ENCODE measurements at regions of chr6 and their contacts with region 1.

Region 1: GRCh38 chr6:134436281-134436815 is 118.4 kb upstream of the SGK1 start:
- DNase-seq: peak; percentile 92 to 95 (median 93)
- H3K4me3 ChIP-seq: peak overlapping the region in 1 of 3 experiments; percentile 47
- H3K4me3 Mint-ChIP-seq: no peak overlapping the region
- H3K27ac ChIP-seq: peak overlapping the region; percentile 86 to 96
- H3K27ac Mint-ChIP-seq: peak overlapping the region; percentile 97 to 99 (median 98)
- H3K4me1 ChIP-seq: peaks cover 29 to 42% of the 10 kb centered on the region in 2 donors
- H3K4me1 Mint-ChIP-seq: peaks cover 35% of the 10 kb centered on the region
- H3K27me3 ChIP-seq: no peaks in the 10 kb centered on the region
- H3K27me3 Mint-ChIP-seq: no peaks in the 10 kb centered on the region
- CTCF ChIP-seq: no peak

Region 2: DNA sequence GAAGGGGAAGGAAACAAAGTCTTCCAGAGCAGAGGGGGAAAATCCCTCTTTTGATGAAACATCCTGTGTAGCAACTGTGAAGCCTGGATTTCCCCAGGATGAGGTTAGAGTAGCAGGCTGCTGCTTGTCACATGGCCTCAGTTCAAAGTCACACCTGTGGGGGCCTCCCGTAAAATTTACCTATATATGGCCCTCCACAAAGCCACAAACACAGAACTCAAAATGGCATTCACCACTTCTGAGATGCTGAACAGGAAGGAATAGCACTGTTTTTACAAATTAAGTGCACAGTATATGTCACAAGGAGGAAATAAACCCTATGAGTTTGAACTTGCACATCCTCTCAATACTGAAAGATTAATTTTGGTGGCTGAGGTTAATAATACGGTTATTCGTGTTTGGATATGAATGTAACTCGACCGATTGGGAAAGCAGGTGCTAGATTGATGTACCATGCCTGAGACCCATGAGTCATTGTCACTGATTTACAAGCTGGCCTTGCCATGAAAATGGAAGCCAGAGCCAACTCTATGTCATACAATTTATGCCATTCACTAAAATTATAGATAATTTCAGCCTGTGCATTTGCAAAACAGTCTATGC is 189.0 kb before region 1 on chr6:
- intact Hi-C with region 1: loop called in 1 of 2 experiments (anchors 5 kb)
- DNase-seq: peak; percentile 46 to 94 (median 87)
- H3K4me3 ChIP-seq: peak overlapping the region in 1 of 3 experiments; percentile 34
- H3K4me3 Mint-ChIP-seq: peak overlapping the region in 1 of 2 donors; percentile 53
- H3K27ac ChIP-seq: peak overlapping the region; percentile 69 to 80
- H3K27ac Mint-ChIP-seq: peak overlapping the region; percentile 90 to 96 (median 94)
- H3K4me1 ChIP-seq: peaks cover 30 to 43% of the 10 kb centered on the region in 2 donors
- H3K4me1 Mint-ChIP-seq: peaks cover 50% of the 10 kb centered on the region
- H3K27me3 ChIP-seq: no peaks in the 10 kb centered on the region
- H3K27me3 Mint-ChIP-seq: peaks cover 0 to 3% (median 0%) of the 10 kb centered on the region in 3 donors
- CTCF ChIP-seq: no peak

Region 3: DNA sequence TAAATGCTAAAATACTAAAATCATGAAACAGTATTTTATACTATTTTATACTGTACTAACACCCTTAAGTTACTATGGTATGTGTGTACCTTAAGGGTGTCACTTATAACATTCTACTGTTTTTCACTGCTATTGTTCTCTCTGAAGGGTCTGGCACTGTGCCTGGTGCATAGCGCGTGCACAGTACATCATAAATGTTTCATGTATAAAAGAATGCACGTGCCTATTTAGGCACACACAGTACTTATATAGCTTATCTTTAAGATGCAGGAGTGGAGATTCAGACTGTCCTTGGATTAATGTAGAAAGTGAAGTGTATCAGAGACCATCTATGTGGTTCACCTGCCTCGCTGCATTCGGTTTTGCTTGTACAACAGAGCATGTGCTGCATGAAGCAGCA is 54.4 kb before region 1 on chr6:
- intact Hi-C with region 1: loop called in 1 of 2 experiments (anchors 10 kb)
- DNase-seq: no peak
- H3K4me3 ChIP-seq: no peak overlapping the region
- H3K4me3 Mint-ChIP-seq: no peak overlapping the region
- H3K27ac ChIP-seq: no peak overlapping the region
- H3K27ac Mint-ChIP-seq: no peak overlapping the region
- H3K4me1 ChIP-seq: peaks cover under 1 to 9% of the 10 kb centered on the region in 2 donors
- H3K4me1 Mint-ChIP-seq: peaks cover 12% of the 10 kb centered on the region
- H3K27me3 ChIP-seq: no peaks in the 10 kb centered on the region
- H3K27me3 Mint-ChIP-seq: peaks cover 0 to 2% (median 0%) of the 10 kb centered on the region in 3 donors
- CTCF ChIP-seq: no peak

Region 4: GRCh38 chr6:134640975-134641429 is 204.7 kb after region 1 on chr6:
- intact Hi-C with region 1: loop called (anchors 5 to 10 kb)
- DNase-seq: peak; percentile 97 to 99 (median 97)
- H3K4me3 ChIP-seq: no peak overlapping the region
- H3K4me3 Mint-ChIP-seq: no peak overlapping the region
- H3K27ac ChIP-seq: peak overlapping the region; percentile 58 to 76
- H3K27ac Mint-ChIP-seq: peak overlapping the region; percentile 84 to 98 (median 92)
- H3K4me1 ChIP-seq: peaks cover 12 to 14% of the 10 kb centered on the region in 2 donors
- H3K4me1 Mint-ChIP-seq: peaks cover 15% of the 10 kb centered on the region
- H3K27me3 ChIP-seq: no peaks in the 10 kb centered on the region
- H3K27me3 Mint-ChIP-seq: peaks cover 0 to 2% (median 2%) of the 10 kb centered on the region in 3 donors
- CTCF ChIP-seq: peak; percentile 93

Region 5: GRCh38 chr6:135044639-135045038 is 608.3 kb after region 1 on chr6:
- intact Hi-C with region 1: no loop called
- DNase-seq: peak in 2 of 3 donors; percentile 10 to 12
- H3K4me3 ChIP-seq: peak overlapping the region in 1 of 3 experiments; percentile 2
- H3K4me3 Mint-ChIP-seq: peak overlapping the region in 1 of 2 donors; percentile 64
- H3K27ac ChIP-seq: peak overlapping the region in 1 of 2 donors; percentile 65
- H3K27ac Mint-ChIP-seq: peak overlapping the region; percentile 57 to 86 (median 75)
- H3K4me1 ChIP-seq: peaks cover 10 to 19% of the 10 kb centered on the region in 2 donors
- H3K4me1 Mint-ChIP-seq: peaks cover 28% of the 10 kb centered on the region
- H3K27me3 ChIP-seq: no peaks in the 10 kb centered on the region
- H3K27me3 Mint-ChIP-seq: no peaks in the 10 kb centered on the region
- CTCF ChIP-seq: no peak

Measured in CD14-positive monocyte (primary cell).